Right cardiac atrium (tissue), 5 donors: ENCODE measurements at regions of chr2 and their contacts with region 1.

Region 1: DNA sequence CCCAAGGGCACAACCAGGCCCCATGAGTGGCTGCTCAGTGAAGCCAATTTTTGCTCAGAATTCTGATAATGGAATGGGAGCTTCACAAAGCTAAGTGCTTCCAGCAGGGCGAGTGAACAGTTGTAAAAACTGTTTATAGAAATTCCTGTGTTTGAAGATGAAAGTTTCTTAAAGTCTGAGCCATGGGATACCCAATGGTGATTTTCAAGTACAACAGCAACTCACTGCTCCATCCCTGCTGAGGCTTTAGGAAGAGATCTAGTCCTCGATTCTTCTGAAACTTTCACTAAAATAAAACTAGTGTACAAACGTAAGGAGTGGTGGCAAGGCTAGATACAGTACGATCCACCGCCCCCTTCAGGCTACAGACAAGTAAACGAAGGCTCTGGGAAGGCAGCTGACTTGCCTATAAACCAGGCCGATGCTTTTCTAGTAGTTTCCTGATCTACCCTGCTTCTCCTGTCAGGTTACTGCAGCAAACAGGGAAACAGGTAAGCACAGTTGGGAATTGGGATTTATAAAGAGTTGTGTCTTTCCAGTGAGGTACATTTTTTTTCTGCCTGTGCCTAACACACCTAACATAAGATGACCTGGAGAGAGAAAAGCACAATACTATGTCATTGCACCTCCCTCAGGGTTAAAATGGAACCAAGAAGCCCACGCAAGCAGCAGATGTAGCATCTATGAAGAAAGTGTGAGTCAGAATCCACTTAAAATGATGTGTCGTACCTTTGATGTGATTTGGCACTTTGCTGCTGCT is 108.7 kb downstream of the UXS1 start:
- DNase-seq: peak in 1 of 3 donors; percentile 69
- ATAC-seq: peak; percentile 64 to 68
- H3K4me3 ChIP-seq: no peak overlapping the region
- H3K27ac ChIP-seq: no peak overlapping the region
- H3K4me1 ChIP-seq: no peaks in the 10 kb centered on the region
- H3K27me3 ChIP-seq: no peaks in the 10 kb centered on the region

Region 2: DNA sequence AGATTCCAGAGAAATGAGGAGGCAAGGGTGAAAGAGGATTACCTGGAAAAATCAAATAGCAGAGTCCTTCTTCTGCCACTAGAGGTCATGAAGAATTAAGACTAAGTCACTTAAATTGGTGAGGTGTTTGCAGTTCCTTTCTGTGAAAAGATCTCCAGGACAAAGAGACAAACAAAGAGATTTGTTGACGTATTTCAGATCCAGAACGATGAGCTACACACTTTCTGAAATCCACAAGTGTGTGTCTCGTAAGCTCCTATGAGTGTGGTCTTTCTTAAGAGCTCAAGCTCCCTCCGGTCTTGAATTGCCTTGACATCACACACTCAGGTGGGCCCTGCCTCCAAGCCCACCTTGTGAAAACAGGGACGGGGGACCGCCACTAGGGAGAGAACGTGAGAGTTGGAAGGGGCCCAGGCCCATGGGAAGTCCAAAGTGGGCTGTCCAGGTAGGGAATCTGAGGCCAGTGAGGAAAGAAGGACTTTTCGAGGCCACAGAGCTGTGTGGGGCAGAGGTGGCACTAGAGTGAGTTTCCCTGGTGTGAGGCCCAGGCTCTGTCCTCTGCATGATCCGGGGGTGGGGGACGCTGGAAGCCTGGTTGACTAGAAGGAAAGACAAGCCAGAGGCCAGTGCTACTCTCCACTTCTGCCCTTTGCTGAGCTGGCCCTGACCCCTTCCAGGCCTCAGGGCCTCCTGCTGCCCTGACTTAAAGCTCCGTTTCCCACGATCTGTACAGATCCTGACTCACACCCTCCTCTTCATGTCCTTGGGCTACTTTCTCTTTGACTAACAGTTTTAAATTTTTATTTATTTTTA is 508.7 kb before region 1 on chr2:
- intact Hi-C with region 1: loop called in 3 of 4 experiments (anchors 10 kb)
- DNase-seq: peak in 1 of 3 donors; percentile 42
- ATAC-seq: peak; percentile 52 to 56
- H3K4me3 ChIP-seq: no peak overlapping the region
- H3K27ac ChIP-seq: no peak overlapping the region
- H3K4me1 ChIP-seq: no peaks in the 10 kb centered on the region
- H3K27me3 ChIP-seq: no peaks in the 10 kb centered on the region

Region 3: DNA sequence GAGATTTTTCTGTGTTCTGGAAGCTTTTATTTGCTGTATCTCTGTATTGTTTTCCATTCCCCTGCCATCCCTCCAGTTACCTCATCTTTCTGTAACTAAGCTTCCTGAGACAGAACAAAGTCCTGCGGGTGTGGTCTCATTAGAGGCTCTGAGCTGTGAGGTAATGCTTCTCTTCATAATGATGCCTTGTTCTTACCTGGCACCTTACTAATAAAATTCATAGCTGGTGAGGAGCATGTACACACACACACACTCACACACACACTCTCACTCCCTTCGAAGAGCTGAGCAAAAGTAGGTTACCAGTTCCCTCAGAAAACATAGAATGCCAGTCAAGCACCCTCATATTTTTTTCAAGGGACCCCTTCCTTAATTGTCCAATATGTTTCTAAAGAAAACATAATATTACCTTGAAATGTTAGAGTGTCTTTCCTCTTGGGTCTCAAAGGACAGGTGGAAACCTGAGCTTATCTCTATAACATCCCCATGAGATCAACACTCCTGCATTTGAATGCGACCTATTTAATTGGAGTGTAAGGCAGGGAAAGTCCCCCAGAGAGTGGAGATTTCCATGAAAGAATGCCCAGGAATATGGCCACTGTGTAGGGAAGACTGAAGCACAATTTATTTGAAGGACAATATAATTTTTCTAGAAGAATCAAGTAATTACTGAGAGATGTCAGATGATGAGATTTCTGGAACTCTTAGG is 502.3 kb before region 1 on chr2:
- intact Hi-C with region 1: loop called in 3 of 4 experiments (anchors 10 kb)
- DNase-seq: no peak
- ATAC-seq: peak in 1 of 2 donors; percentile 22
- H3K4me3 ChIP-seq: no peak overlapping the region
- H3K27ac ChIP-seq: no peak overlapping the region
- H3K4me1 ChIP-seq: no peaks in the 10 kb centered on the region
- H3K27me3 ChIP-seq: no peaks in the 10 kb centered on the region

Region 4: GRCh38 chr2:105644174-105644980 is 441.0 kb before region 1 on chr2:
- intact Hi-C with region 1: no loop called
- DNase-seq: no peak
- ATAC-seq: no peak
- H3K4me3 ChIP-seq: no peak overlapping the region
- H3K27ac ChIP-seq: no peak overlapping the region
- H3K4me1 ChIP-seq: no peaks in the 10 kb centered on the region
- H3K27me3 ChIP-seq: no peaks in the 10 kb centered on the region

Region 5: DNA sequence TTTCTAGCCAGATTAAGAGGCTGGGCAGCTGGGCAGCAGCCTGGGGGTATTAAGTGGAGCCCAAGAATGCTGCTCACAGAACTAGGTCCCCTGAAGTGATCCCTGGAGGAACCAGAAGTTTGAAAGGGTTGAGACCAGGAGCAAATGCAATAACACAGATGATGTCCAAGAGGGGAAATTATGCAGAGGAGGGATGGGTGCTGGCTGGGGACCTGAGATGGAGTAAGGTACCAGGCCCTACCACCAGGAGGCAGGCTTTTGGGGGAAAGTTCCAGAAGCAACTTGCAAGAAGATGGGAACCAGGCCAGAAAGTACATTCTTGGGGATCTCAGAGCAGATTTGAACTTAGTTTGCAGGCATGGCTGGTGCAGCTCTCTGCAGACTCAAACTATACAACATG is 165.5 kb before region 1 on chr2:
- intact Hi-C with region 1: loop called in 1 of 4 experiments (anchors 10 kb)
- DNase-seq: no peak
- ATAC-seq: no peak
- H3K4me3 ChIP-seq: no peak overlapping the region
- H3K27ac ChIP-seq: no peak overlapping the region
- H3K4me1 ChIP-seq: peaks cover 5% of the 10 kb centered on the region
- H3K27me3 ChIP-seq: no peaks in the 10 kb centered on the region